Dendritic cell treated with granulocyte-macrophage colony-stimulating factor and Interleukin-4, amounts not matched to agents 40 ng/mL and 50 ng/mL, for 4 days (primary cell): ENCODE measurements at regions of chr5 and their contacts with region 1.

Region 1: DNA sequence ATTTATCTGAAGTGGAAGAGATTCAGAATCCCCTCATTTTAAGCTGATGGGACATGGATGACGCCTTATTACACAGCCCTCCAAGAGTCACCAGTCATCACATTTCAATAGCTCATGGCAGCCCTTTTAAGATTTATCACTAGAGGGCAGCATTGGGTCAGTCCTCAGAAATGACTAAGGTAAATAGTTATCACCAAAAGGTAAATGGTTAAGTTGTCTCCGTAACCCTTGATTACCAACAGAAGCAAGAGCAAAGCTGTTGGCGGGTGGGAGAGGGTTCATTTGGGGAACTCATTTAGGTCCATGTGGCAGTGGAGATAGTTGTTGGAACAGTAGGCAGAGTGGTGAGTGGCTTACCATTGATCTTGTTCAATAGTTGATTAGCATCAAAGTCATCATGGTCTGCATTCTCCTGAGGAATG is 12.0 kb upstream of the C9 start:
- H3K4me3 Mint-ChIP-seq: no peak overlapping the region
- H3K27ac Mint-ChIP-seq: no peak overlapping the region
- H3K4me1 Mint-ChIP-seq: no peaks in the 10 kb centered on the region
- H3K27me3 Mint-ChIP-seq: no peaks in the 10 kb centered on the region

Region 2: DNA sequence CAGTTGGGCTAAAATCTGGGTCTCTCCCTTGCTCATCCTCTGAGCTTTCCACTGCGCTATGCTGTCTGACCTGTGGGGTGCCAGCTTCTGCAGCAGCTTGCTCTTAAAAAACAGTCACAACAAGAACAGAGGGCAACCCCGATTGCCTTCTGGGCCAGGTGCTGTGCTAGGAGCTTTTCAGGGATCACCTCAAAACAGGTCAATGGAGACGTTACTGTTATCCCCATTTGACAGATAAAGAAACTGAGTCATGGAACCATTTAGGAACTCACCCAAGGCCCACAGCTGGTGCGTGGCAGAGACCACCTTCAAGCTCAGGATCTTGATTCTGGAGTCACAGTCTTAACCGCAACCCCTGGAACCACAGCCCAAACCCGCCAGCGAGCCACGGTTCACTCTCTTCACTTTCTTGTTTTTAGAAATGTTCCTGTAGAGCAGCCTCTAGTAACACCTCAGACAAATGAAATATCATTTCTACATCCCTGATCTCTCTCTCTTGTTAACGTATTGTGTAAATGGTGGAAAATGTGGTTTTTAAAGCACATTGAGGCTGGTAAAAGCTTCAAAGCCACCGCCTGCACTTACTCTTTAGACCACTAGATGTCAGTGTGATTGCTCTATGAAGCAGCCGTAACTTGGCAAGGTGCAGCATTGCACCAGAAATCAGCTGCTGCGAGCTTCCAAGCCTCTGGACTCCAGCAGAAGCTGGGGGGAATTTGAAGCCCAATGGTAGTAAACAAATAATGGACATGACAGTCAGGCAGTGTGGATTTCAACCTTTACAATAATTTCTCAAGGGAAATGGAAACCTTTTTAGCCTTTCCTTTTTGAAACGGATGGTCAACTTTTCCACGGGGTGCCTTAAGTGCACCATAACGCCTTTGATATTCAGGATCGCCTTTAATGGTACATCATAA is 158.7 kb before region 1 on chr5:
- intact Hi-C with region 1: loop called (anchors 10 kb)
- H3K4me3 Mint-ChIP-seq: peak overlapping the region; percentile 50
- H3K27ac Mint-ChIP-seq: peak overlapping the region; percentile 91
- H3K4me1 Mint-ChIP-seq: peaks cover 79% of the 10 kb centered on the region
- H3K27me3 Mint-ChIP-seq: no peaks in the 10 kb centered on the region

Region 3: GRCh38 chr5:39399135-39400036 is 23.1 kb after region 1 on chr5:
- intact Hi-C with region 1: loop called (anchors 2 kb)
- H3K4me3 Mint-ChIP-seq: peak overlapping the region; percentile 37
- H3K27ac Mint-ChIP-seq: peak overlapping the region; percentile 95
- H3K4me1 Mint-ChIP-seq: peaks cover 64% of the 10 kb centered on the region
- H3K27me3 Mint-ChIP-seq: no peaks in the 10 kb centered on the region

Region 4: DNA sequence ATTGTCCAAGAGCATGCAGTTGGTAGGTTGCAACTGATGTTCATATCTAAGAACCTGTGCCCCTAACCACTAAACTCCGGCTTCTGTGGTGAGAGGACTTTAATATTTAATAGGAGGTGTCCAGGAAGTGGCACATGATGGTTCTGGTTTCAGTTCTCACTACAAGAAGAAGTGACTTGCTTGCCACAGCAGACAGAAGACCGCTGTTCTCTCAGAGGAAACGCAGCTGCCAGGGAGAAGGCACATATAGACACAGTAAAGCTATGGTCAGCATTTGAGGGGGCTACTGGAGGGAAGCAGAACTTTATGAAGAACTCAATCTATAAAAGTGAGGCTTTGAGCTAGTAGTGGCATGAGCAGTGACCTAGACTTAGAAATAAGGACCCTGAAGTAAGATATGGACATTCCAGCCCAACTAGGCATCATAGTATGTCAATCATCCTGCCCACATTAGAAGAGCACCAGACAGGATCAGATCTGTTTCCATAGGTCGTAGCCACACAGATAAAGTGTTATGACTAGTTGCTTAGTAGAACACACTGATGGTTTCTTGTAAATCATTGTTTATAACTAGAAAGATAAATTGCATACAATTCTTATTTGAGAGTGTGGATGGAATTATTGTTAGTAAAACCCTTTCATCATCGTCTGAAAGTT is 84.8 kb after region 1 on chr5:
- intact Hi-C with region 1: no loop called
- H3K4me3 Mint-ChIP-seq: no peak overlapping the region
- H3K27ac Mint-ChIP-seq: peak overlapping the region; percentile 89
- H3K4me1 Mint-ChIP-seq: peaks cover 76% of the 10 kb centered on the region
- H3K27me3 Mint-ChIP-seq: peaks cover 1% of the 10 kb centered on the region

Region 5: GRCh38 chr5:39547553-39548154 is 171.3 kb after region 1 on chr5:
- intact Hi-C with region 1: loop called (anchors 2 kb)
- H3K4me3 Mint-ChIP-seq: no peak overlapping the region
- H3K27ac Mint-ChIP-seq: no peak overlapping the region
- H3K4me1 Mint-ChIP-seq: peaks cover 7% of the 10 kb centered on the region
- H3K27me3 Mint-ChIP-seq: no peaks in the 10 kb centered on the region

Region 6: GRCh38 chr5:40437452-40437861 is 1061.2 kb after region 1 on chr5:
- intact Hi-C with region 1: no loop called
- H3K4me3 Mint-ChIP-seq: no peak overlapping the region
- H3K27ac Mint-ChIP-seq: no peak overlapping the region
- H3K4me1 Mint-ChIP-seq: peaks cover 18% of the 10 kb centered on the region
- H3K27me3 Mint-ChIP-seq: no peaks in the 10 kb centered on the region